Activated T-helper 2 cell treated with anti-CD3 and anti-CD28 coated beads, Interferon-gamma antibody, Interleukin-2, Interleukin-4, amounts not matched to agents 10 μg/mL and 5 μg/mL and 100 μg/mL, durations not matched to agents 14 hours and 24 hours and 36 hours (primary cell): ENCODE measurements at regions of chr2 and their contacts with region 1.

Region 1: DNA sequence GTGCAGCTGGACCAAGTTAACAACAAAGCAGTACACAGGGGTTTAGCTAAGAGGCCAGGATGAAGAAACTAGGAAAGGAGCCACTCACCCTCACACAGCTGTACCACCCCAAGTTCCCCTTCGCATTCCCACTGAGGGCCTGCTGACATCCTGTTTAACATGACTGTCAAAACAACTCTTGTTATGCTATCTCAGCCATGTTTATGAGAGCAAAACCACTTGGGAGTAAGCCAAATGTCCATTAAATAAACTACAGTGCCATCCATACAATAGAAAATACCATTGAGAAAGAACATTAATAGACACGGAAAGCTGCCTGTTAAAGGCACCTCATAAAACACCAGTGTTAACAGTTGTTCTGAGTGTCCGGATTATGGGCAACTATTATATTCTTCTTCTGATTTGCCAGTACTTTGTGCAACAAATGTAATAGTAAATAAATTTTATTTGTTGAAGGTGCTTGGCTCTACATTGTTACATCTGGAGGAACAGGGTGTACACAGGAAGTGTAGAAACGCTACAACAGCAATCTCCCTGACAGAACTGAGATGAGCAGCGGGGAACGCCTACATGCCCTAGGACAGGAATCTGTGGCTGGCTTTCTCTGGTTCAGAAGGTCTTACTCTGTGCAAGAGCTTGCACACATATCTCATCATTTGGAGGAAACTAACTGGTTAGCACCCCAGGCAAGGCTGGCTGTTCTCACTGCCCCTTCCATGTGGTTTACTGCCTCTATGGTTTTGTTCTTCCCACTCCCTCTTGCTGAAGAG is 85.6 kb downstream of the EHD3 start:
- DNase-seq: peak; percentile 15
- H3K4me3 Mint-ChIP-seq: no peak overlapping the region
- H3K27ac Mint-ChIP-seq: peak overlapping the region; percentile 62
- H3K4me1 Mint-ChIP-seq: peaks cover 57% of the 10 kb centered on the region
- H3K27me3 Mint-ChIP-seq: peaks cover 1% of the 10 kb centered on the region

Region 2: DNA sequence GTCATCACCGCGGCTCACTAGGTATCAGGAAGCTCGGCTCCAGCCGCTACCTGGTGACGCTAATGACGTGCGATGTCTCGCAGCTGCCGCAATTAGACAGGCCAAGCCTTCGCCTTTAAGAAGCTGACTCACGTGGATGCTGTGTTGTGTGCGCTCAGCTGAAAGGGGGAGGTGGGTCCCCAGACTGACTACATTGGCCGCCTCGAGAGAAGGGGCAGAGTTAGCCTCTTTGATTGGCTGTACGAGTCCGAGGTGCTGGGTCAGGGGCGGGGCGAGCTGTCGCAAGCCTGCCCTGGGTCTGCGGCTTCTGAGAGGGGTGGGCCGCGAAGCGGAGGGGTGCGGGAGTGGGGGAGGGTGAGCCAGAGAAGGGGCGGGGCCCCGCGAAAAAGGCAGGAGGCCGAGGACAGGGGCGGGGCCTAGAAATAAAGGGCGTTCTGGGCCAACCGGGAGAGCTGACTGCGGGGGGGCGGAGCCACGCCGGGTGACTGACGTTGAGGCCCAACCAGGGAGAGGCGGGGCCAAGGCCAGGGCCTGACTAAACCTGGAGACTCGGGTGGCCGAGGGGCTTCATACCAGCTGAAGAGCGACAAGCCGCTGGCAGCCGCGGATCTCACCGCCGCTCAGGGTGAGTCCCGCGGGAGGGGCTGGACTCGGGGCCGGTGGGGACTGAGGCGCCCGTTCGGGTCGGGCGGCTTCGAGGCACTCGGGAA is 1173.0 kb before region 1 on chr2 and contains the start of gene YPEL5:
- intact Hi-C with region 1: loop called (anchors 5 kb)
- DNase-seq: peak; percentile 99
- H3K4me3 Mint-ChIP-seq: peak within 1 kb of the TSS; percentile 77
- H3K27ac Mint-ChIP-seq: peak within 1 kb of the TSS; percentile 92
- H3K4me1 Mint-ChIP-seq: peaks cover 34% of the 10 kb centered on the region
- H3K27me3 Mint-ChIP-seq: no peaks in the 10 kb centered on the region
- total RNA-seq, gene YPEL5: 24.1 and 27.8 TPM in 2 replicates

Region 3: GRCh38 chr2:30447149-30448045 is 872.2 kb before region 1 on chr2 and contains the start of gene LCLAT1:
- intact Hi-C with region 1: loop called (anchors 5 kb)
- DNase-seq: peak; percentile 81
- H3K4me3 Mint-ChIP-seq: peak within 1 kb of the TSS; percentile 94
- H3K27ac Mint-ChIP-seq: peak within 1 kb of the TSS; percentile 97
- H3K4me1 Mint-ChIP-seq: peaks cover 21% of the 10 kb centered on the region
- H3K27me3 Mint-ChIP-seq: no peaks in the 10 kb centered on the region
- total RNA-seq, gene LCLAT1: 24.6 and 28.9 TPM in 2 replicates

Region 4: GRCh38 chr2:31233741-31234682 is 85.6 kb before region 1 on chr2 and contains the start of gene EHD3:
- intact Hi-C with region 1: loop called (anchors 5 kb)
- DNase-seq: peak; percentile 72
- H3K4me3 Mint-ChIP-seq: peak within 1 kb of the TSS; percentile 69
- H3K27ac Mint-ChIP-seq: no peak within 1 kb of the TSS
- H3K4me1 Mint-ChIP-seq: peaks cover 9% of the 10 kb centered on the region
- H3K27me3 Mint-ChIP-seq: peaks cover 18% of the 10 kb centered on the region
- total RNA-seq, gene EHD3: 1.6 and 2.0 TPM in 2 replicates